SK-N-SH (cell line): ENCODE measurements at regions of chr17 and their contacts with region 1.

Region 1: DNA sequence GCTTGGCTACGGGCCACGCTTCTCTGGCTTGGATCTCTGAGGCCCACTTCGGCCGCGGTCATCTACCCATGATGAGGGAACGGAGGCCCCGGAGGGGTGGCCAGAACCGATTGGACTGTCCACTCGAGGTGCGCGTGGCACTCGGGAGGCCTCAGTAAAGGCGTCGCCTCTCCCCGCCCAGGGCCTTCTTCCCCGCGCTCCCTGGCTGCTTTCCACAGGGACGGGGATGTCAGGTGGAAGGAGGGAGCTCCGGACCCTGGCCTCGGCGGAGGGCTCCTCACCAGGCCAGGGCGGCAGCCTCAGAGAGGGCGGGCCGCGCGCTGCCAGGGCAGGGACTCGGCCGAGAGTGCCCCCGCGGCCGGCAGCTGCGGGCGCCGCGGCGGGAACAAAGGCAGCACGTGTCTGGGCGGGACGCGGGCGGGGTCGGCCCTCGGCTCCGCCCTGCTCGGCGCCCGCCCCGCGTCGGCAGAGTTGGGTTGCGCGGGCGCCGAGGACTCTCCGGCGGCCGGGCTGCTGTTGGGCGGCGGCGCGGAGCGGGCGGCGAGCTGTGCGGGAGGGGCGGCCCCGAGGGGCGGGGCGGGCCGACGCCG is 587 bp upstream of the CDK5R1 start:
- DNase-seq: peak; percentile 96
- H3K4me3 ChIP-seq: peak overlapping the region in 1 of 2 experiments; percentile 76; a peak in 3 of 4 replicates
- H3K27ac ChIP-seq: peak overlapping the region in 1 of 2 experiments; percentile 88; a peak in 2 of 4 replicates
- H3K4me1 ChIP-seq: peaks cover 0 to 51% of the 10 kb centered on the region in 2 experiments; a peak in 2 of 4 replicates
- H3K27me3 ChIP-seq: no peaks in the 10 kb centered on the region
- CTCF ChIP-seq: no peak
- EP300 ChIP-seq: no peak
- RAD21 ChIP-seq: no peak

Region 2: DNA sequence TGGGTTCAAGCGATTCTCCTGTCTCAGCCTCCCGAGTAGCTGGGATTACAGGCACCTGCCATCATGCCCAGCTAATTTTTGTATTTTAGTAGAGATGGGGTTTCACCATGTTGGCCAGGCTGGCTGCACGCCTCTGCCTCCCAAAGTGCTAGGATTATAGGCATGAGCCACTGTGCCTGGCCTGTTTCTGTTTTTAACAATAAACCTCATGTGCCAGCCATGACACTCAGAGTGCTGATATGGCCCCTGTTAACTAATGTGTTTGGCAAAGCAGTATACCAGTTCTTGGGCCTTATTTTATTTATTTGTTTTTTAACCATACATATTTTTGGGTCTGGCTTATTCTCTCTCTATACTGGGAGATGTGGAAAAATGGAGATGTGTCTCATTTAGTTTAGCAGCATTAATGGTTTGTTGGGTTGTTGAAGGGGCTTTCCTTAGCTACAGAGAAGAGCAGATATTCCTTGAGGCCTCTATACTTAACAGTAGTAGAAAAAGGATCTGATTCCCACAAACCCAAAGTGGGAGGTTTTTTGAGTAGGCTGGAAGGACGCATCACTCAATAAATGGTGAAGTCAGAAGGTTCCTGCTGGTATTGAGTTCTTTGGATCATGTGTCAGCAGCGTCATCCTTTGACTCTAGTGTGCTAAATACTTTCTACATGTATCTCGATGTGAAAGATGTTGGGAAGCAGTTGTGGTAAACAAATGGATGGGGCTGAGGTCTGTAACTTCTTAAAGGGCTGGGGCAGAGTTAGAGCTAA is 15.6 kb before region 1 on chr17:
- CTCF ChIA-PET with region 1: interaction called, 46 read pairs
- POLR2A ChIA-PET with region 1: interaction called, 4 read pairs
- DNase-seq: no peak
- H3K4me3 ChIP-seq: no peak overlapping the region
- H3K27ac ChIP-seq: no peak overlapping the region
- H3K4me1 ChIP-seq: no peaks in the 10 kb centered on the region
- H3K27me3 ChIP-seq: no peaks in the 10 kb centered on the region
- CTCF ChIP-seq: no peak
- EP300 ChIP-seq: no peak
- RAD21 ChIP-seq: no peak

Region 3: GRCh38 chr17:32746698-32747097 is 260.5 kb after region 1 on chr17:
- CTCF ChIA-PET with region 1: interaction called, 15 read pairs
- POLR2A ChIA-PET with region 1: no interaction called
- DNase-seq: no peak
- H3K4me3 ChIP-seq: no peak overlapping the region
- H3K27ac ChIP-seq: no peak overlapping the region
- H3K4me1 ChIP-seq: no peaks in the 10 kb centered on the region; a peak in 1 of 4 replicates
- H3K27me3 ChIP-seq: no peaks in the 10 kb centered on the region
- CTCF ChIP-seq: no peak
- EP300 ChIP-seq: no peak
- RAD21 ChIP-seq: no peak

Region 4: GRCh38 chr17:32755045-32755805 is 269.0 kb after region 1 on chr17:
- CTCF ChIA-PET with region 1: interaction called, 25 read pairs
- POLR2A ChIA-PET with region 1: interaction called, 4 read pairs
- DNase-seq: peak; percentile 66
- H3K4me3 ChIP-seq: no peak overlapping the region
- H3K27ac ChIP-seq: no peak overlapping the region
- H3K4me1 ChIP-seq: no peaks in the 10 kb centered on the region; a peak in 1 of 4 replicates
- H3K27me3 ChIP-seq: no peaks in the 10 kb centered on the region
- CTCF ChIP-seq: peak; percentile 75
- EP300 ChIP-seq: no peak
- RAD21 ChIP-seq: peak; percentile 95

Region 5: GRCh38 chr17:32769839-32770238 is 283.6 kb after region 1 on chr17:
- CTCF ChIA-PET with region 1: interaction called, 14 read pairs
- POLR2A ChIA-PET with region 1: interaction called, 4 read pairs
- DNase-seq: no peak
- H3K4me3 ChIP-seq: no peak overlapping the region
- H3K27ac ChIP-seq: no peak overlapping the region
- H3K4me1 ChIP-seq: no peaks in the 10 kb centered on the region; a peak in 1 of 4 replicates
- H3K27me3 ChIP-seq: no peaks in the 10 kb centered on the region
- CTCF ChIP-seq: no peak
- EP300 ChIP-seq: no peak
- RAD21 ChIP-seq: peak; percentile 22; the same call in 1 of the 2 replicates